K562 (cell line): ENCODE measurements at regions of chr22 and their contacts with region 1.

Region 1: DNA sequence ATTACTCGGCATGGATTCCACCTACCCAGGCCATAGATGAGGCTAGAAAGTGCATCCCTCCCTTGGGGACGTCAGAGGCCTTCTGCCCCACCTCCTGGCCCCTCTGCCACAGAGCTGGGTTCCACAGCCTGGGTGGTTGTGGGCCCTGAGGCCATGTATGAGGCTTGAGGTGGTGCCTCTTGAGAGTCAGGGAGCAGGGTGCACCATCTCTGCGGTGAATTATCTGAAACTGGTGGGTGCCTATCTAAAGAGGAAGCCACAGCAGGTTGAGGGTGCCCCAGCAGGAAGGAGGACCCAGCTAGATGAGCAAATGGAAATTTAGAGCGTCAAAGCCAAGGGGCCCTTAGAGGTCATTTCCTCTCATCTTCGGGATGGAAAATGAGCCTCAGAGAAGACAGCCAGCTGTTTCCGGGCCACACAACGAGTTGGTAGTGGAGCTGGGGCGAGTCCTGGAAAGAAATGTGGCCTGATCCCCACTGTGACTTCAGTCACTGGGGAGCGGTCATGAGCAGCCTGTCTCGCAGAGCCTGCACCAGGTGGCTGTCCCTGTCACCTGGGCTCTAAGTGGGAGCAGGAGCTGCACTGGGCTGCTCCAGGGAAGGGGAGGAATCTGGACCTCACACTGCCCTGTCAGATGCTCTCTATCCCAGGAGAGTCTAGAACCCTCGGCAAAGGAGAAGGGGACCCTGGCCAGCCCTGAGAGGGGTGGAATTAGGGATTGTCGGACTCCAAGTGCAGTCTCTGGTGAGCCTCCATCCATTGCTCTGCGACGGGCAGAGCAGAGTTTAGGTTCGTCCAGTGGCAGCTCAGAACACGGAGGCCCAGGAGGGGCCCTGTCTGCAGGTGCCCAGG is 7.3 kb downstream of the ADORA2A start:
- DNase-seq: no peak
- ATAC-seq: no peak
- H3K4me3 ChIP-seq: no peak overlapping the region
- H3K27ac ChIP-seq: no peak overlapping the region
- H3K4me1 ChIP-seq: peaks cover 0 to 23% of the 10 kb centered on the region in 2 experiments; a peak in 3 of 5 replicates
- H3K27me3 ChIP-seq: peaks cover 0 to 4% of the 10 kb centered on the region in 2 experiments; a peak in 1 of 5 replicates
- CTCF ChIP-seq: no peak
- EP300 ChIP-seq: no peak
- POLR2A ChIP-seq: no peak
- RAD21 ChIP-seq: no peak

Region 2: DNA sequence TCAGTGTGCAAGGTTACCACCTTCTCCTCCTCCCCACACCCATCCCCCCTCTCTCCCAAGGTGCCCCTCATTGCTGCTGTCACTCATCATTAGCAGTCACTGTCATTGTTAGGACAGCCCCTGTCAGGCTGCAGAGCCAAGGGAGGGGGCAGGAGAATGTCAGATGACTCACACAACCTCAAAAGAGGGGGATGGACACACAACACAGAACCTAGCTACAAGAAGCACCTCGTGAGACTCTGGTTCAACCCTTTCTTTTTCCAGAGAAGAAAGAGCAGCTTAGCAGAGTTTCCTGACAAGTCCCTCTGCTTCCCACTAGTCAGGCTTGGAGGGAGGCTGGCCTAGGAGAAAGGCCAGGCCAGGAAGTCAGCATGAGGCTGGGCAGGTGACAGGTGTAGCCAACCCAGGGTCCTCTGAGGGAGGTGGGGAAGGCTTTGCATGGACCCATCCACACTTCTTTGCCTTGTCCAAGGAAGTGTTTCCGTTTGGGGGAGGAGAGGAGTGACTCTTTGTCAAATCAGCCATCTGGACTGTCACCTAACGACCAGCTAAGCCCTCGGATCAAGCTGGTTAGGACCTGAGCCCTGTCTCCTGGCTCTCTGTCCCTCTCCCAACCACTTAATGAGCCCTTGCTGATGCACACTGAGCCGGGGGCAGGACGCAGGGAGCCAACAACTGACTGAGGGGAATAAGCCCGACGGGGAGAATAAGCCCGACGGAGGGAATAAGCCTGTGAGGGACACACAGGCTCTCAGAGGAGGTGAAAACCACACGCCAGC is 11.0 kb after region 1 on chr22:
- CTCF ChIA-PET with region 1: no interaction called
- POLR2A ChIA-PET with region 1: interaction called, 11 read pairs
- in situ Hi-C with region 1: no loop called
- intact Hi-C with region 1: no loop called
- DNase-seq: peak; percentile 58 to 67 (median 65)
- ATAC-seq: peak; percentile 80
- H3K4me3 ChIP-seq: no peak overlapping the region
- H3K27ac ChIP-seq: peak overlapping the region; percentile 53; the same call in 2 of the 3 replicates
- H3K4me1 ChIP-seq: peaks cover 20 to 24% of the 10 kb centered on the region in 2 experiments
- H3K27me3 ChIP-seq: no peaks in the 10 kb centered on the region
- CTCF ChIP-seq: no peak
- EP300 ChIP-seq: no peak
- POLR2A ChIP-seq: no peak
- RAD21 ChIP-seq: no peak